ENCODE measurements at regions of chr17 and their contacts with region 1.

Region 1: GRCh38 chr17:76696763-76697701 is 13.7 kb downstream of the MXRA7 start:
- DNase-seq: no peak
- H3K4me3 ChIP-seq: no peak overlapping the region
- H3K27ac ChIP-seq: peak overlapping the region; percentile 29 to 71
- H3K4me1 ChIP-seq: peaks cover 0 to 10% of the 10 kb centered on the region in 2 donors
- H3K27me3 ChIP-seq: no peaks in the 10 kb centered on the region
- CTCF ChIP-seq: no peak
- POLR2A ChIP-seq: no peak

Region 2: DNA sequence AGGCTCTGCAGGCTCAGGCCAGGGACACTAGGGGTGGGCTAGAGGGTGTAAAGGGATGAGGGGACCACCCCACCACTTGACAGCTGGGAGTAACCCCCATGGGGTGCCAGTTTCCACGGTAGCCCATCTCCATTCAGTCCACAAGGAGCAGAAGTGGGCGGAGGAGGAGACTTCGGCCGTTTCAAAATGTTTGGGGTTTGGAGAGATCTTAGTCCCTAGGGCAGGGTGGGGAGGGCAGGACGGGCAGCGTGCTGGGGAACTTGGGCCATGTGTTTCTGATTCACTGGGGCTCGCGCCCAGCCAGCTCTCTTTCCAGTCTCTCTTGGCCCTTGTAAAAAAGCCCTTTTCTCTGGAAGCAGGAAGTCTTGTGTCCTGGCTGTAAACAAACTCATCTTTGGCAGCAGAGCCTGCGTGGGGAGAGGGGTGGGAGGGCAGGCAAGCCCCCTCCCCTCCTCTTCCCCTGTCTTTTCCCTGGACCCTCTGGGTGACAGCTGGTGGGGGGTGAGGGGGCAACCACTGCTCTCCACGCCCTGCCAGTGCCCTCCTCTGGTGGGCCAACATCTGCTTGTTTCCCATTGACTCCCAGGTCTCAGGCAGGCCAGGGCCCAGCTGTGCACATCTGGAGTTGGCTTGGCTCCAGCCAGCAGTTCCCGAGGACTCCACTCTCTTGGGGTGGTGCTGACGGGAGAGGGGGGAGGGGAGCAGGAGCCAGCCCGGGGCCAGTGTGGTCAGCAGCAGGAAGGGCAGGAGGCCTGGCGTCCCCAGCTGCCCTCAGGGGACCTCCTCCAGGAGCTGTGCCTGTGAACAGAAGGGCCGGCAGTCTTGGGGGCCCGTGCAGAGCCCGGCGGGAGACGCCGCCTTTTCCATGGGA is 167.6 kb before region 1 on chr17:
- intact Hi-C with region 1: loop called (anchors 10 kb)
- DNase-seq: peak; percentile 68 to 78
- H3K4me3 ChIP-seq: peak overlapping the region in 2 of 3 donors; percentile 11 to 53
- H3K27ac ChIP-seq: peak overlapping the region; percentile 94 to 99
- H3K4me1 ChIP-seq: peaks cover 20 to 25% of the 10 kb centered on the region in 2 donors
- H3K27me3 ChIP-seq: no peaks in the 10 kb centered on the region
- CTCF ChIP-seq: peak in 2 of 3 donors; percentile 9 to 18
- POLR2A ChIP-seq: no peak

Region 3: GRCh38 chr17:76635659-76636360 is 61.2 kb before region 1 on chr17:
- intact Hi-C with region 1: loop called (anchors 2 kb)
- DNase-seq: peak in 1 of 2 donors; percentile 10
- H3K4me3 ChIP-seq: no peak overlapping the region
- H3K27ac ChIP-seq: no peak overlapping the region
- H3K4me1 ChIP-seq: no peaks in the 10 kb centered on the region
- H3K27me3 ChIP-seq: no peaks in the 10 kb centered on the region
- CTCF ChIP-seq: no peak
- POLR2A ChIP-seq: no peak

Measured in breast epithelium (tissue), 4 donors.